Panc1 (cell line): ENCODE measurements at regions of chr4 and their contacts with region 1.

Region 1: DNA sequence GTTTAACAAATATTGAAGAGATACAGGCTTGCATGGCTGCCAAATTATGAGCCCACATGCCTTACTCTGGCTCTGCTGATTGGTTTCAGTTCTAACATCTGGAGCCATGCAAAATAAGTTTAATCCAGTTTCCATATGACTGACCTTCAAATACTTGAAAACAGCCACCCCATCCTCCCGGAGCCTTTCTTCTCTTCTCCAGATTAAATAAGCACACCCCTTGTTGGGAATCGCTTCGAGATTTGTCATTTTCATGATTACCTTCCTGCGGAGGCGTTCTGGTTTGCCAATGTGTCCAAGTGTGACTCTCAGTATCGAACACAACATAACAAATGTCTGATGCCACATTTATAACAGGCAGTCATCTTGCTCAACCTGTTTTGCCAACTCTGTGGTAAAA is 101.6 kb upstream of the JADE1 start:
- DNase-seq: no peak
- ATAC-seq: no peak
- H3K4me3 ChIP-seq: no peak overlapping the region
- H3K27ac ChIP-seq: no peak overlapping the region
- H3K4me1 ChIP-seq: no peaks in the 10 kb centered on the region
- H3K27me3 ChIP-seq: no peaks in the 10 kb centered on the region
- CTCF ChIP-seq: no peak

Region 2: DNA sequence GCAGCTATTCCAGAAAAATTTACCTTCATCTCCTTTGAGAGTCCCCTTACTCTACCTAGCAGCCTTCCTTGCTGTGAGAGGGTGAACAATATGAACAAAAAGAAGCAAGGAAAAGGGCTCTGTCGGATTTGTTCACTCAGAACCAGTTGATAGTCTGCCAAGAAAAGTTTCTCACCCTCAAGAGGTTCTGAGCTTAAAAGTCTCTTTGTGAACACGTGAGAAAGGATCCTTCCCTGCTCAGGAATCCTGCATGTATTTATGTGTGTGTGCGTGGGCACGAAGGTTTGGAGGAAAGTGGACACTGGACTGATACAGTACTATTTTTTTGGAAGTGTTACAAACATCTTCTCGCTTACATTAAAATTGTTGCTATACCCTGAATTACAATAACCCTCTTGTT is 77.0 kb before region 1 on chr4:
- CTCF ChIA-PET with region 1: no interaction called
- POLR2A ChIA-PET with region 1: interaction called, 10 read pairs
- in situ Hi-C with region 1: no loop called
- intact Hi-C with region 1: no loop called
- DNase-seq: no peak
- ATAC-seq: no peak
- H3K4me3 ChIP-seq: no peak overlapping the region
- H3K27ac ChIP-seq: no peak overlapping the region
- H3K4me1 ChIP-seq: no peaks in the 10 kb centered on the region
- H3K27me3 ChIP-seq: no peaks in the 10 kb centered on the region
- CTCF ChIP-seq: no peak